ENCODE measurements at regions of chr5 and their contacts with region 1.

Region 1: GRCh38 chr5:154754460-154755360 is 467 bp upstream of the LARP1 start:
- DNase-seq: peak; percentile 100
- ATAC-seq: peak; percentile 95

Region 2: DNA sequence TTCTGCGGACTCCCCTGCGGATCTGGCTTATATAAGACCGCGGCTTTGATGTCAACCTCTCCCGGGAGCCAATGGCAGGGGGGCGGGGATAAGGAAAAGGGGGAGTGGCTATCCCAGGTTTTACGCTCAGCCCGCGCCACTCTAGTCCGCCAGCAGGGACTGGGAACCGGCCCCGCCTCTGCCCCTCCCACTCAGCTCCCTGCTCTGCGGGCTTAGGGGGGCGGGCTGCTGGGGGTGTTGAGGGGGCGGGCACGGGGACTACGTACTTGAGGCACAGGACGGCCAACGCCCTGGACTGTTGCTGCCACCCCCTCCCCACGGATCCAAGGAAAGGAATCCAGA is 276.5 kb before region 1 on chr5 and contains the start of gene HAND1:
- intact Hi-C with region 1: loop called (anchors 10 kb)
- DNase-seq: peak; percentile 76
- ATAC-seq: peak; percentile 89
- total RNA-seq, gene HAND1: 29.8 TPM

Region 3: DNA sequence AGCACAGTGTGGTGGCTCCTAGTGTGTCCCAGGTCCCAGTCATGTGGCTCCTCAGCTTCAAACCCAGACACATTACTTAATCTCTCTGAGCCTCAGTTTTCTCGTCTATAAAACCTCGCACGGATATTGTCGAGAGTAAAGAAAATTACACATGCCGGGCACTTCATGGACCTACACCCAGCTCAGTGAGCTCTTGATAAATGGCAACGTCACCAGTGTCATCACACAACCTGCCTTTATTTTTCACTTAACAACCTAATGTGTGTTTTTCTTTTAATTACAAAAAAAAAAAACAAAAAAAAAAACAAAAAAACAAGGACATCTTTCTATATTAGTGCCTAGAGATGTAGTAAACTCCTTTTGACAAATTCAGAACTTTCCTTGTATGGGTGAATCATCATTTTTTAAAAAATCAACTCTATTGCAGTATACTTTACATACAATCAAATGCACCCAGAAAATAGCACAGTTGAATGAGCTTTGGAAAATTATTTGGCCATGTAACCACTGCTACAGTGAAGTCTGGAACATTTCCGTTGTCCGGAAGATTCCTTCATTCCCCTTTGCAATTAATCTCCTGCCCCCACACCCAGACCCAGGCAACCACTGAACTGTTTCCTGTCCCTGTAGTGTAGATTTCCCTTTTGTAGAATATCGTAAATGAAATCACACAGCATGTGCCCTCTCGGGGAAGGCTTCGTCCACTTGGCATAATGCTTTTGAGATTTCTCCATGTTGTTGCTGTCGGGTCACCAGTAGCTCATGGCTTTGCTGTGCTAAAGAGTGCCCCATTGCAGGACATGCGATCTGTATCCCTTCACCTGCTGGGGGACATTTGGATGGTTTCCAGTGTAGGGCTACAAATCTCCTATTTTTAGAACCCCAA is 100.0 kb before region 1 on chr5:
- intact Hi-C with region 1: loop called (anchors 5 kb)
- DNase-seq: no peak
- ATAC-seq: no peak

Region 4: DNA sequence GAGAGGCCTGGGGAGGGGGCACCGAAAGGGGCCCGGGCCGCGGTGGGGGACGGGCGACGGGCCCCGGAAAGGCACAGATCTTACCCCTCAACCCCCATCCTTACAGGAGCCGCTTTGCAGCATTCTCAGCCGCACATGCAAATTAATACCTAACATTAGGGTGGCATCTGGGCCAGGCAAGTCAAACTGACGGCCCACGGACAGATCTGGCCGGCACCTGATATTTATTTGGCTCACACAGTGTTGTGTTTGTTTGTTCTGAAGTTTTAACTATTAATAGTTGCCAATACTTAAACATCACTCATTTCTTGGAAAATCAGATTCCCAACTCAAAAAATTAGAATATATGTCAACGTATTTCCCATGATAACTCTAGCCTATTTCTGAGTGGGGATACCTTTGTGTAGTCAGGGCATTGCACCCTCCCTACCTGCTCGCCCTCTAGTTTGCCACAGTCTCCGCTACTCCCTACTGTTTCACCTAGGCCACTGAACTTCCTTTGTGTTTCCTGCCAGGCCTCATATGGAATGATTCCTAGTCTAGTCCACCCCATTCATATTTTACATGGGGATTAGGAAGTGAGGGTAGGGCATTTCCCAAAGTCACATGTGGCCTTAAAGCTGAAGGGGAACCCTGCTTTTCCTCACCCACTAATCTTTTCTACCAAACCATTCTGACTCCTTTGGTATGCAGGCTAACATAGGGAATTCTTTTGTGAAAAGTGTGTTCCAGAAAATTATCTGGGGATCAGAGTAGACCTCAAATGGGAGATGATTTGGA is 71.4 kb before region 1 on chr5:
- intact Hi-C with region 1: loop called (anchors 2 kb)
- DNase-seq: no peak
- ATAC-seq: peak; percentile 3

Region 5: DNA sequence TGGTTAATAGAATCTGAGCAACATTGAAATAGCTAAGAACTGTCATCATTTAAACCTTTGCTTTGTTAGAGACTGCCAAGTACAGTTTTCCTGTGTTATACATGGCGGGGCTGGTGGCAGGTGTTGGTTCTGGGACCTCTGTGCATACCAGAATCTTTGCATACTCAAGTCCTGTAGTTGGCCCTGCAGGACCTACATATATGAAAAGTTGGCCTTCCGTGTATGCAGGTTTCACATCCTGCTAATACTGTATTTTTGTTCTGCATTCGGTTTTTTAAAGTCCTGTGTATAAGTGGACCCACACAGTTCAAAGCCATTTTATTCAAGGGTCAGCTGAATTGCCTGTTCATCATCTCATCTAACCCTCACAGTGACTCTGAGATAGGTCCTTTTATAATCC is 36.8 kb after region 1 on chr5:
- intact Hi-C with region 1: loop called (anchors 5 kb)
- DNase-seq: no peak
- ATAC-seq: no peak

Region 6: DNA sequence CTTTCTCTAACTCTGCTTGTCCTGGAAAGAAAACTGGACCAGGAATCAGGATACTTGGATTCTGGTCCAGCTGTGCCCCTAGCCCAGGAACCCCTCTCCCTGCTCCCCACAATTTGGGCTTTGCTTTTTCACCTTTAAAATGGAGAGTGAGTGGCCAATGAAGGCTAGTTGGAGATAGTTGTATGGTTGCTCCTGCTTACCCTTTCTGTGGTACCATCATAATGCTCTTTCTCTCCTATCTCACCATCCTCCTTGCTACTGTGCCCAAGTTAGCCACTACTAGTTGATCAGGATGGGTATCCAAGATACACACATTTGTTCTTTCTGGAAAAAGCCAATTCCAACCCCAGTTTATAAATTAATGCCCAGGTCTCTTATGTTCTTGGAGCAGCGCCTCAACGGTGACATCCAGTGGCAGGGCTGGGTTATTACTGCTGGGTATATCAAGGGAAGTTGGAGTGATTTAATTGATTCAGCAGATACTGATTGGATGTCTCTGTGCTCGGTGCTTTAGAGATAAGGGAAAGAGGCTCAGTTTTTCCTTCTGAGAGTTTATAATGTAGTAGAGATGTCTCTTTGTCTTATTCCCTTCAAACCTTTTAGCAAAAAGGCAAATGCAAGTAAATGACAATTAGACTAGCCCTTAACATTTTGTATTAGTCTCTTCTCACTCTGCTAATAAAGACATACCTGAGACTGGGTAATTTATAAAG is 57.1 kb after region 1 on chr5:
- intact Hi-C with region 1: loop called (anchors 5 kb)
- DNase-seq: no peak
- ATAC-seq: peak; percentile 70

Region 7: DNA sequence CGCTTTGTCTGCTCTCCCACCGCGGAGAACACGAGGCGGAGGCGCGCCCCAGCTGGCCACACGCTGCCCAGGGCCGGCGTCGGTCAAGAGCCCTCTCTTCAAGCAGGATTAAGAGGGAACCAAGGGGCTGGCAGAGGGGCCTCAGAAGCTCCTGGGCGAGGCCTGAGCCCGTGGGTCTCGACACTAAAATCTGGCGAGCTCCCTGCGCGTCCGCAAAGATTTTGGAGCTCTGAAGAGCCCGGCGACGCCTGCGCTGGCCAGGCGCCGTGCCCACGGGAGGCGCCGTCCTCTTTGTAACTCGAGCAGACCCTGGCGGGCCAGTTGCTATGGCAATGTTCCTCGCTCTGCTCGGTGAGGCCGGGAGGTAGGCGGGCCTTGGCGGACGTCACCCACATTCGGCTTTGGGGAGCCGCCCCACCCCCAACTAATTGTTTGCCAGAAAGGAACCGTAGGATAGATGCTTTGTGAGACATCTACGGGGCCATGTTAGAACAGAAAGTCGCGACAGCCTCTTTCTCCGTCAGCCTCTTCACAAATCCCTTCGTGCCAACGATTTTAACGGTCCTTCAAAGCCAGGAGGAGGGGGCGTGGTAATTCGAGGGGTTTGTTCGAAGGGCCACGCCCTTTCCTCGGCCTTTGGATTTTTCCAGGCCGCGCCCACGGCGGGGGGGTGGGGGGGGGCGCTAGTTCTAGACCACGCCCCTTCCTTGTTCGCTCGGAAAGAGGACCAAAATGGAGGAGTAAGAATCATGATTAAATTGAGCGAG is 103.0 kb after region 1 on chr5:
- intact Hi-C with region 1: loop called (anchors 2 kb)
- DNase-seq: peak; percentile 99
- ATAC-seq: peak; percentile 84